Panc1 (cell line): ENCODE measurements at regions of chr19 and their contacts with region 1.

Region 1: GRCh38 chr19:55809381-55810058 is 22.3 kb downstream of the NLRP11 start:
- DNase-seq: peak; percentile 28
- ATAC-seq: peak; percentile 96
- H3K4me3 ChIP-seq: no peak overlapping the region
- H3K27ac ChIP-seq: no peak overlapping the region
- H3K4me1 ChIP-seq: no peaks in the 10 kb centered on the region
- H3K27me3 ChIP-seq: peaks cover 3% of the 10 kb centered on the region; the same call in 1 of the 2 replicates
- CTCF ChIP-seq: peak; percentile 87

Region 2: GRCh38 chr19:55599468-55600279 is 209.8 kb before region 1 on chr19 and contains the start of gene FIZ1:
- CTCF ChIA-PET with region 1: no interaction called
- POLR2A ChIA-PET with region 1: no interaction called
- in situ Hi-C with region 1: no loop called
- intact Hi-C with region 1: no loop called
- DNase-seq: peak; percentile 94
- ATAC-seq: peak; percentile 90
- H3K4me3 ChIP-seq: peak within 1 kb of the TSS; percentile 79 to 85
- H3K27ac ChIP-seq: peak within 1 kb of the TSS; percentile 100
- H3K4me1 ChIP-seq: peaks cover 14% of the 10 kb centered on the region
- H3K27me3 ChIP-seq: no peaks in the 10 kb centered on the region
- CTCF ChIP-seq: no peak
- total RNA-seq, gene FIZ1: 28.5 TPM

Region 3: DNA sequence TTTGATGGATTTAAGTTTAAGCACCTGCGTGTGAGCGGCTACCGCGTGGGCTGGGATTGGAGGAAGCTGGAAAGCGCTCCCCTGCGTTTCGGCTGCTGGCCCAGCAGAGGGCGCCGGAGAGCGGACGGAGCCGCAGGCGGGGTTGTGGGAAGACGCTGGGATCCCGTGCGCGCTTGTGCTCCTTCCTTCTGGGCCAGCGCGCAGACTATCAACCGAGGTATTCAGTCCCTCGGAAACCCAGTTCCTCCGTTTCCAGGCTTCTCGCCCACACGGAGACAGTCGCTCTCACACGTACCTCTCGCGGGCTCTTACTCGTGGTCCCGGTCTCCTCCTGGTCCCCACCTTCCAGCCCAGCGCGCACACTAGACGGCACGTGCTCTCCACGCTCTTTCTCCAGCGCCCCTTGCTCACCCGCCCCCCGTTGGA is 105.7 kb before region 1 on chr19:
- CTCF ChIA-PET with region 1: interaction called, 3 read pairs
- POLR2A ChIA-PET with region 1: no interaction called
- in situ Hi-C with region 1: no loop called
- intact Hi-C with region 1: loop called (anchors 10 kb)
- DNase-seq: no peak
- ATAC-seq: peak; percentile 76
- H3K4me3 ChIP-seq: no peak overlapping the region
- H3K27ac ChIP-seq: no peak overlapping the region
- H3K4me1 ChIP-seq: no peaks in the 10 kb centered on the region
- H3K27me3 ChIP-seq: no peaks in the 10 kb centered on the region
- CTCF ChIP-seq: peak; percentile 98

Region 4: GRCh38 chr19:55777528-55777927 is 32.0 kb before region 1 on chr19:
- CTCF ChIA-PET with region 1: no interaction called
- POLR2A ChIA-PET with region 1: no interaction called
- in situ Hi-C with region 1: no loop called
- intact Hi-C with region 1: no loop called
- DNase-seq: peak; percentile 2
- ATAC-seq: no peak
- H3K4me3 ChIP-seq: no peak overlapping the region
- H3K27ac ChIP-seq: no peak overlapping the region
- H3K4me1 ChIP-seq: 0 out of 2 replicates have a peak, but pooled peaks cover 3% of the 10 kb centered on the region
- H3K27me3 ChIP-seq: peaks cover 6% of the 10 kb centered on the region; the same call in 1 of the 2 replicates
- CTCF ChIP-seq: peak; percentile 76

Region 5: DNA sequence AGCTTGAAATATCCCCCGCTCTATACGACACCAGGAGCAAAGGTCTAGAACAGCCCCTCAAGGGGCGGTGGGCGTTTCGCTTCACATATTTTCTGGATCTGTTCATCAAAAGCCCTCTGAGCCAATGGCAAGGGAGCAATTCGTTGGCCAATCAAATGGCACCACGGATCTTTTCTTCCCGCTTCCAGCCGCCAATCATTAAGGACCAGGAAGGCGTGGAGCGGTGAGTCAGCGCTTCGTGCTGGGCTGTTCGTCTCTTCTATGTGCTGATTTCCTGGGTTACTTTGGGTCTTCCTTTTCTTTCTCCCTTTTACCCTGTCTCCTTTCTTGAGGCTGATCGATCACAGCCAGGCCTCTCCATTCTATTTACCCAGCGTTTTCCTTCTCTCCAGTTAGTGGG is 26.8 kb after region 1 on chr19 and contains the start of gene NLRP4:
- CTCF ChIA-PET with region 1: interaction called, 15 read pairs
- POLR2A ChIA-PET with region 1: no interaction called
- in situ Hi-C with region 1: no loop called
- intact Hi-C with region 1: no loop called
- DNase-seq: no peak
- ATAC-seq: no peak
- H3K4me3 ChIP-seq: no peak within 1 kb of the TSS
- H3K27ac ChIP-seq: no peak within 1 kb of the TSS
- H3K4me1 ChIP-seq: no peaks in the 10 kb centered on the region
- H3K27me3 ChIP-seq: peaks cover 19% of the 10 kb centered on the region
- CTCF ChIP-seq: no peak
- total RNA-seq, gene NLRP4: not detected

Region 6: DNA sequence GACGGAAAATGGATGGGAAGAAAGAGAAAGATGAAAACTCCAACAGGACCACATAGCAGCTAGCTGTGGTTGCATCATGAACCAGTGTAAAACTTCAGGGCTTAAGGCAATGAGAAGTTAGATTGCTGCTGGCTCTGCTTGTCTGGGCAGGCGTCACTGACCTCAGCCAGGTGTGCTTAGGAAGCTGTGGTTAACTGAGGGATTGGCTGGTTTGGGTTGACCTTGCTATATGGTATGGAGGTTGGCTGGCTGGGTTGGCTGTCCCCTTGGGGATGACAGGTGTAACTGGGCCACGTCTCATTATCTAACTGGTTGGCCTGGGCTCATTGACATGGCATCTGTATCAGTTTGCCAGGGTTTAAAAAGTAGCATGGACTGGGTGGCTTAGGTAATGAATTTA is 67.7 kb after region 1 on chr19:
- CTCF ChIA-PET with region 1: no interaction called
- POLR2A ChIA-PET with region 1: no interaction called
- in situ Hi-C with region 1: no loop called
- intact Hi-C with region 1: loop called (anchors 2 kb)
- DNase-seq: no peak
- ATAC-seq: no peak
- H3K4me3 ChIP-seq: no peak overlapping the region
- H3K27ac ChIP-seq: no peak overlapping the region
- H3K4me1 ChIP-seq: no peaks in the 10 kb centered on the region
- H3K27me3 ChIP-seq: peaks cover 29% of the 10 kb centered on the region
- CTCF ChIP-seq: no peak